Activated CD4-positive, alpha-beta T cell treated with anti-CD3 and anti-CD28 coated beads, Interleukin-2, amount 10 ng/mL, durations not matched to agents 24 days and 14 days (primary cell): ENCODE measurements at regions of chr12 and their contacts with region 1.

Region 1: GRCh38 chr12:102484428-102484958 is 4.1 kb upstream of the IGF1 start:
- DNase-seq: peak; percentile 88
- H3K4me3 Mint-ChIP-seq: peak overlapping the region; percentile 75
- H3K27ac Mint-ChIP-seq: peak overlapping the region; percentile 89
- H3K4me1 Mint-ChIP-seq: peaks cover 32% of the 10 kb centered on the region
- H3K27me3 Mint-ChIP-seq: no peaks in the 10 kb centered on the region

Region 2: DNA sequence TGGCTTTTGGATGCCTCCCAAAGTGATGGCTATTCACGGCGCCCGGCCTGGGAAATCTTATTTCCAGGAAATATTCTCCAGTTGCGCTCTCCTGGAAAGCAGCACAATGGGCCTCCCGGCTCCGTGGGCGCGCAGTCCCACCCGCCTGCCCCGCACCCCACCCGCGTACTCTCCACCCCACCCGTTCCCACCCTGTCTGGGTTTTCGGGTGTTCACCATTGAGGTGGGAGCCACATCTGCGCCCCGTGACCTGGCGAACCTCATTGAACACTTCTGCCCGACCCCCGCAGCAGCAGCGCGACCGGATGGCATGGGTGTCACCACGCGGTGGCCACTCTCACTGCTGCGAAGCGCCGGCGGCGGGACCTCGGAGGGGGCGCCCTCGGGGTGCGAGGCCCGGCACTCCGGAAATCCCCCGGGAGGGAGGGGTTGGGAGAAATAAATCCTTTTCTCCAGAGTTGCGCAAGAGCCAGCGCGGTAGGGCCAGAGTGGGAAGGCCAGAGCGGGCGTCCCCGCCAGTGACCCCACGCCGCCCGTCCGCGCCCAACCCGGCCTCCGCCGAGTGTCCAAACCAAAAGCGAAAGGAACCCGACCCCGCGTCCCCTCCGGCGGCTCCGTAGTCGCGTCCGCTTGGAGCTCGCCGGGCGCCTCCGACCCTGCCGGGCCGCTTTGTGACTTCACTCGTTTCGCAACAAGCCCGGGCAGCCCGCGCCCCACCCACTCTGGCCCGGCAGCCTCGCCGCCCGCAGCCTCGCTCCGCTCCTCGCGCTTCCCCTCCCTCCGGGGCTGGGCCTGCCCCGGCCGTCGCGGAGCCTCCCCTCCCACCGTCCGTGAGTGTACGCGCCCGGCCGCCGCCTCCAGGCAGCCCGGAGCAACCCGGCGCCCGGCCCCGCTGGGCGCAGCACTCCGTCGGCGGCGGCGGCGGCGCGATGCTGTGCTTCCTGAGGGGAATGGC is 607.4 kb before region 1 on chr12 and contains the start of gene DRAM1:
- intact Hi-C with region 1: loop called (anchors 5 kb)
- DNase-seq: peak; percentile 94
- H3K4me3 Mint-ChIP-seq: peak within 1 kb of the TSS; percentile 95
- H3K27ac Mint-ChIP-seq: peak within 1 kb of the TSS; percentile 90
- H3K4me1 Mint-ChIP-seq: peaks cover 16% of the 10 kb centered on the region
- H3K27me3 Mint-ChIP-seq: peaks cover 2% of the 10 kb centered on the region
- total RNA-seq, gene DRAM1: 4.3 and 4.6 TPM in 2 replicates

Region 3: DNA sequence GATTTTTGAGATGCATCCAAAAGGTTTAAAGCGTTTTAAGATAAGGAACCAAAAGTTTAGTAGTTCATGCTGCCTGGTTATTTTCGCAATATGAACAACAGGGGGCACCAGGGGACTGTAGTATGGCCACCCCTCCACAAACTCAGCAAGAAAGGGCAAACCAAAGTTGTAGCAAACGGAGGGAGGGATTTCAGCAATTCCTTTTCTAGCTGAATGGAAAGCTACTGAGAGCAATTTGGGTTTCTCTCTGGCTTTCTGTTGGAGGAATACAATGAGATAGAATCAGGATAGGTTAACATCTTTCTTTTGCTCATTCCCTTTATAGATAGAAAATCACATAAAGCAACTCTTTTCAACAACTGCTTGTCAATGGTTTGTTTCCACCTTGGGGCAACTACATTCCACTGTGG is 544.6 kb before region 1 on chr12:
- intact Hi-C with region 1: loop called (anchors 2 kb)
- DNase-seq: peak; percentile 89
- H3K4me3 Mint-ChIP-seq: no peak overlapping the region
- H3K27ac Mint-ChIP-seq: no peak overlapping the region
- H3K4me1 Mint-ChIP-seq: peaks cover 24% of the 10 kb centered on the region
- H3K27me3 Mint-ChIP-seq: peaks cover 6% of the 10 kb centered on the region

Region 4: GRCh38 chr12:102119674-102120563 is 364.6 kb before region 1 on chr12 and contains the starts of genes NUP37 and PARPBP:
- intact Hi-C with region 1: loop called (anchors 1 kb)
- DNase-seq: peak; percentile 98
- H3K4me3 Mint-ChIP-seq: peak within 1 kb of the TSS; percentile 96
- H3K27ac Mint-ChIP-seq: peak within 1 kb of the TSS; percentile 94
- H3K4me1 Mint-ChIP-seq: peaks cover 35% of the 10 kb centered on the region
- H3K27me3 Mint-ChIP-seq: no peaks in the 10 kb centered on the region
- total RNA-seq, gene NUP37: 88.1 and 97.3 TPM in 2 replicates
- total RNA-seq, gene PARPBP: 22.9 TPM in 2 replicates

Region 5: DNA sequence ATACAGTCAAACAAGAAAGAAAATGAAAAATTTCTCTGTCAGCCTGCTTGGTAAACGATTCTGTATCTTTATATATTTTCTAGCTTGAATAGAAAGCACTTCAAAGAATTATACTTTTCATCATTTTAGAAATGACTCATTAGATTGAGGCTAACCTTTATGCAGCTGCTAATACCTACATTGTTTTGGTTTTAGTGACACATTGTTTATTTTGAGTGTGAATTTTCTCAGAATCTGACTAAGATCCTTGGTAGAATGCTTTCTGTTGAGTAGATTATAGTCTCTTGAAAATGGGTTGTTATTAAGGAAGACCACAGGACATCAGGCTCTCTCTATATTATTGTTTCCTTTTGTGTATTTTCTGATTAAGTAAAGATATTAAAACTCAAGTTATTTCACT is 286.7 kb before region 1 on chr12 and contains the start of gene PMCH:
- intact Hi-C with region 1: loop called (anchors 1 kb)
- DNase-seq: no peak
- H3K4me3 Mint-ChIP-seq: peak within 1 kb of the TSS; percentile 35
- H3K27ac Mint-ChIP-seq: peak within 1 kb of the TSS; percentile 87
- H3K4me1 Mint-ChIP-seq: peaks cover 17% of the 10 kb centered on the region
- H3K27me3 Mint-ChIP-seq: no peaks in the 10 kb centered on the region
- total RNA-seq, gene PMCH: 6.3 and 8.4 TPM in 2 replicates

Region 6: DNA sequence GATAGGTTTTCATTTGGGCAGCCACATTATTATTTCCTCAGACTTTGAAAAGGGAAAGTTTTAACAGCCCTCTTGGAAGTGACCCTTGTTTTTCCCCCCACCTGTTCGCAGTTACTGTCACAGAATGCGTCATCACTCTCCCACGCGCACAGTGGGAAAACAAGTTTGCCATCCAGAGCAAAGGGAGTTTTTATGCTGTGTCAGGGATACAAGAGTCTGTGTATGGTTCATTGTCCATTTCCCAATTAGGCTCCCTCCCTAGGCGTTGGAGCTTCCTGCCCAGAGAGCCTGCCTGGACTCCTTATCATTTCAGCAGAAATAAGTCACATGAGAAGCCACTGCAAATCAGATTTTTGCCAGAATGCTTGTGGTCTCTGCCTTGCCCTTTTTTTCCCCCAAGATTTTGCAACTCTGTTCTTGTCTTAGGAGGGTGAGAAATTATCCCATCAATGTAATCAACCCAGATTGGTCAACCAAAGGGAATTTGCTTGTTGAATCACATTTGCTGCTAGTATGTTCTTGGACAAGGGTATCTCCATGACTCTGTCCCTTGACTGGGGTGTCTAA is 108.2 kb before region 1 on chr12:
- intact Hi-C with region 1: loop called (anchors 5 kb)
- DNase-seq: no peak
- H3K4me3 Mint-ChIP-seq: no peak overlapping the region
- H3K27ac Mint-ChIP-seq: no peak overlapping the region
- H3K4me1 Mint-ChIP-seq: peaks cover 4% of the 10 kb centered on the region
- H3K27me3 Mint-ChIP-seq: no peaks in the 10 kb centered on the region

Region 7: DNA sequence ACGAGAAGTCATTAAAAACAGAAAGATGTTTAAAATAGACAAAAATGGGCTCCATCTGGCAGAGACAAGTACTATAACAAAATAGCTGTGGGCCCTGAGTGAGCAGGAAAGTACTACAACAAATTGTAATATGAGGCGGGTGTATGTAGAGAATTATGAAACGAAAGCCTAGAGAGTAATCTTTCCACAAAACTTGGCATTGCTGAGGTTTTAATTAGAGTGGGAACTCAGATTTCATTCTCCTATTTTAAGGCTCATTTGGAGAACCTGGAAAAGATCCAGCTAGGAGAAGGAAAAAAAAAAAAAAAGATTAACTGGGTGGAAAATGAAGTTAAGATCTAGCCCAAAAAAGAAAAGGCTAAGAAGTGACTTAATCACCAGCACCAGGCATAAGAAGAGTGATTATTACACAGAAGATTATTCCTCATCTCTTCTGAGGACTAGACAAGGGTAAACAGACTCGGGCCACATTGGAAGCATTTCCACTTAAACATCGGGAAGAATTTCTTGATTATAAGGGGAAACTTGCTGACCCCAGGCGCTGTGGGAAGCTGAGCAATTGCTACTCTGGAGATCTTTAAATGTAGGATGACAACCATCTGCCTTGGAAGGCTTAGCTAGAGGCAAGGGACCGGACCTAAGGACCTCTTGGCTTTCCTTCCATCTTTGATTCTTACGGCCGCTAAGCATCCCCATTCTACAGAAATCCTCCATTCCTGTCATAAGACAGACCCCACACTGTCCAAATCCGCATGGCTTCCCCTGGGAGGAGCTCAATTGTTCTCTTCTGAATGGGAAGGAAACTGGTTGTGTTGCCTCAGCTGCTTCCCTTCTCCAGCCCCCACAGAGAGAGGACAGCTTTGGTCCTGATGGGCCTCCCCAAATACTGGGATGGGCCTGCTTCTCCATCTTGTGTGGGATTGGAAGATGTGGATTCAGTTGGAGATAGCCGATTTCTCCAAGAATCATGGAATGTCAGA is 44.8 kb before region 1 on chr12:
- intact Hi-C with region 1: loop called (anchors 5 kb)
- DNase-seq: no peak
- H3K4me3 Mint-ChIP-seq: no peak overlapping the region
- H3K27ac Mint-ChIP-seq: no peak overlapping the region
- H3K4me1 Mint-ChIP-seq: peaks cover 5% of the 10 kb centered on the region
- H3K27me3 Mint-ChIP-seq: peaks cover 2% of the 10 kb centered on the region